Activated naive CD4-positive, alpha-beta T cell treated with anti-CD3 and anti-CD28 coated beads, Interleukin-2, amount 10 ng/mL, durations not matched to agents 7 days and 5 days (primary cell): ENCODE measurements at regions of chr13 and their contacts with region 1.

Region 1: GRCh38 chr13:101144808-101145419 is 271.4 kb downstream of the NALCN start:
- DNase-seq: peak; percentile 33
- H3K4me3 Mint-ChIP-seq: no peak overlapping the region
- H3K27ac Mint-ChIP-seq: no peak overlapping the region
- H3K4me1 Mint-ChIP-seq: no peaks in the 10 kb centered on the region
- H3K27me3 Mint-ChIP-seq: peaks cover 23% of the 10 kb centered on the region

Region 2: GRCh38 chr13:101155920-101156319 is 11.0 kb after region 1 on chr13:
- CTCF ChIA-PET with region 1: interaction called, 11 read pairs
- DNase-seq: no peak
- H3K4me3 Mint-ChIP-seq: no peak overlapping the region
- H3K27ac Mint-ChIP-seq: no peak overlapping the region
- H3K4me1 Mint-ChIP-seq: no peaks in the 10 kb centered on the region
- H3K27me3 Mint-ChIP-seq: peaks cover 11% of the 10 kb centered on the region

Region 3: DNA sequence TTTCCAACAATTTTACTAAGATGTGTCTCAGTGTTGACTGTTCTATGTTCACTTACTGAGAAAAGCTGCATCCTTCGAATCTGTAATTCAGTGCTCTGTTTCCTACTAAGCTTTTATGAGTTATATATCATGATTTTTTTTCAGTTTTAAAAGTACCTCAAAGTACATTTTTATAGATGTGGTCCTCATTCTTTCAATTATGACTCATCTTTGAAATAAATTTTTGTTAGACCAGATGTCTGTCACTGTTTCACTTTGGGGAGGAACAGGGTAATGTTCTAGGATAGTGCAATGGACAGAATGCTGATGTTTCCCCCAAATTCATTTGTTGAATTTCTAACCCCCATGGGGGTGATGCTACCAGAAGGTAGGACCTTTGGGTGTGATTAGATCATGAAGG is 196.6 kb after region 1 on chr13:
- CTCF ChIA-PET with region 1: no interaction called
- DNase-seq: no peak
- H3K4me3 Mint-ChIP-seq: no peak overlapping the region
- H3K27ac Mint-ChIP-seq: no peak overlapping the region
- H3K4me1 Mint-ChIP-seq: no peaks in the 10 kb centered on the region
- H3K27me3 Mint-ChIP-seq: no peaks in the 10 kb centered on the region

Region 4: DNA sequence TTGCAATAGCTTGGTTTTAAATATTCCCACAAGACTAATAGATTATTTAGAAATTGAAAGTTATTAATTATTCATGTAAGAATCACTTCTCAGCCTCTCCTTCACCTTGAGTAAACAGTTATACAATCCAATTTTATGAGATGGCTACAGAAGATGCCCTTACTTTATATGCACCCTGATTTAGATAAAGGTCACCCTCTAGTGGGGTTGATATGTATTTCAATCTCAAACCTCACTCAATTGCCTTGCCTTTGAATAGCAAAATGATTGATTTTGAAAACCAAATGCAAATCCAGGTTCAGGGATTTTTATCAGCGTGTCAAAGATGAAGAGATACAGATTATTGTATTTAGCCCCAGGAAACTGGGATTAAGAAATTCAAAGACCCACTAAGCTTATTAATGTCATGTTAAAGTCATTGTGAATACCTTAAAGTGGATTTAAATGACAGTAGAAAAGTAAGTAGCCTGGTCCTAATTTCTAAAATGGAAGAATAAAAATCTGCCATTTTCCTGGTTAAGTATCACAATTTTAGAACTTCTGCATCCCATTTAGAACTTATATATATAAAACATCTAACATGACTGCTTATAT is 612.6 kb after region 1 on chr13:
- CTCF ChIA-PET with region 1: interaction called, 13 read pairs
- DNase-seq: no peak
- H3K4me3 Mint-ChIP-seq: no peak overlapping the region
- H3K27ac Mint-ChIP-seq: no peak overlapping the region
- H3K4me1 Mint-ChIP-seq: no peaks in the 10 kb centered on the region
- H3K27me3 Mint-ChIP-seq: no peaks in the 10 kb centered on the region

Region 5: GRCh38 chr13:102555917-102556553 is 1411.1 kb after region 1 on chr13:
- CTCF ChIA-PET with region 1: interaction called, 15 read pairs
- DNase-seq: no peak
- H3K4me3 Mint-ChIP-seq: no peak overlapping the region
- H3K27ac Mint-ChIP-seq: no peak overlapping the region
- H3K4me1 Mint-ChIP-seq: no peaks in the 10 kb centered on the region
- H3K27me3 Mint-ChIP-seq: peaks cover 8% of the 10 kb centered on the region